Right ventricle myocardium inferior (tissue), 1 donor: ENCODE measurements at regions of chr10 and their contacts with region 1.

Region 1: GRCh38 chr10:113612154-113612553 is 51.7 kb downstream of the NRAP start:
- DNase-seq: no peak
- ATAC-seq: peak; percentile 75

Region 2: GRCh38 chr10:113386005-113386404 is 226.1 kb before region 1 on chr10:
- intact Hi-C with region 1: no loop called
- DNase-seq: no peak
- ATAC-seq: no peak

Region 3: DNA sequence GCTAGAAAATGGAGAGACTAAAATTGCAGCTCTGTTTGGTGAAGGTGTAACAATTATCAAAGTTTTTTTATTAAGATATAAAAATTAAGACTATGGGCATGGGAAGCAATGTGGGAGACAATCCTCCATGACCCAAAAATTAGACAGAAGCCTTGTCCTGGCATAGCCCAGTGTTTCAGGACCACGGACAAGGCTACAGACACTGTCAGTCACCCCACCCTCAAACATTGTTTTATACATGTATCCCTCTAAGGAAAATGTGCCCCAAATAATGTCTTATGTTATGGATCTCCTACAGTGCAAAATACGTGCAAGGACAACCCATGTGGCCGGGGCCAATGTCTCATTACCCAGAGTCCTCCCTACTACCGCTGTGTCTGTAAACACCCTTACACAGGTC is 35.3 kb before region 1 on chr10:
- intact Hi-C with region 1: no loop called
- DNase-seq: no peak
- ATAC-seq: no peak

Region 4: DNA sequence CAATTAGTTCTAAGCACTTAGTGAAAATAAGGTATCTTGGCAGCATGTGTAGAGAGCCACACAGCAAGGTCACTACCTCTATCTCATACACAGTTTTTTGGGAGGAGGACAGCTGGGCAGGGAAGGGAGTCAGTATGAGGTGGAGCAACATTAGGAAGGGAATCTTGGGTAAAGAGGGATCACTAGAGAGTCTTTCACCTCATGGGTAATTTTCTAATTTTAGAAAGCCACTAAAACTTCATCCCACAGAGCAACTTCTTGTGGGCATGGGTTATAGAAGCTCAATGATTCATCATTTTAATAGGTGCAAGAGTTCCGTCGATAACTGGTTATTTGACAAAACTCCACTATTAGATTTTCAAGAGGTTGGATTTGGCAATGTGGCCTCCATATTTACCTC is 49.2 kb after region 1 on chr10:
- intact Hi-C with region 1: loop called (anchors 1 kb)
- DNase-seq: no peak
- ATAC-seq: peak; percentile 76

Region 5: GRCh38 chr10:113735921-113736320 is 123.8 kb after region 1 on chr10:
- intact Hi-C with region 1: no loop called
- DNase-seq: no peak
- ATAC-seq: no peak